Naive thymus-derived CD4-positive, alpha-beta T cell (primary cell): ENCODE measurements at regions of chrX and their contacts with region 1.

Region 1: GRCh38 chrX:136933611-136934145 is 53.2 kb upstream of the RBMX start:
- DNase-seq: no peak
- ATAC-seq: no peak
- H3K4me3 ChIP-seq: no peak overlapping the region
- H3K4me3 Mint-ChIP-seq: no peak overlapping the region
- H3K27ac ChIP-seq: no peak overlapping the region
- H3K27ac Mint-ChIP-seq: no peak overlapping the region
- H3K4me1 ChIP-seq: peaks cover 0 to 9% of the 10 kb centered on the region in 2 donors
- H3K4me1 Mint-ChIP-seq: peaks cover 0 to 23% (median 0%) of the 10 kb centered on the region in 7 donors
- H3K27me3 ChIP-seq: no peaks in the 10 kb centered on the region
- H3K27me3 Mint-ChIP-seq: no peaks in the 10 kb centered on the region

Region 2: DNA sequence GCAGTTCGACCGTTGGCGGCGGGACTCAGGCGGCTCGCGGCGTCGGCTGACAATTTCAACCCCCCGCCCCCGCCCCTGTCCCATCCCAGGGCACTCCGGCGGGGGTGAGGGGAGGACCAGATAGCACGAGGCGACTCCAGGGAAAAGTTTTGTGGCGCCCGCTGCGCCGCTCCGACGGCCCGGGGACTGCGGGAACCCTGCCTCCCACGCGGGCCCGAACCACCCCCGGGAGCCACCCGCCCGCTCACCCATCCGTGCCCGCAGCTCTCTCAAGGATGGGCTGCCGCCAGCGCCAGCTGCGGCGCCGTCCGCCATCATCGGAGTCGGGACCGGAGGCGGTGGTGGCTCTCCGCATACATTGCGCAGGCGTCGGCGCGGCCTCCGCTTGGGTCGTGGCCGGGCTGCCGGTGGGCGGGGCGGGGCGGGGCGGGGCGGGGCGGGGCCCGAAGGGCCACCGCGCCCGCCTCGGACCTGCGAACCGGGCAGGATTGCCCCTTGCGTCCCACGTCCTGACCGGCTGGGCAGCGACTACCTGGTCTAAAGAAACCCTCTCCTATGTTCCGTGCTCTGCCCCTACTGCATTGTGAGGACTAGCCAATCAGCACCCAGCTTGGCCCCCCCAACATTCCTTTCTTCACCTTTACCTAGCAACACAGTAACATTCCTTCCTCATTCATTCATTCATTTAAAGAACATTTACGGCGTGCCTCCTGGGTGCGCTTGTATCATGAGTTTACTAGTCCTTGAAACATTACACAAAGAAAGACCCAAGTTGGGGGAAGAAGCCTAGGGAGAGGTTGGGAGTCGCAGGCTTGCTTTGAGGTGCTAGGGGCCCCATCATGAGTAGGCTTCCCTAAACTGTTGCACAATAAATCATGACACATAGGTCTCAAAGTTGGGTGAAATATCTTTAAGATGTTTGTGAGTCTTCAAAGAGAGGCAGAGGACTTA is 682.4 kb before region 1 on chrX and contains the start of gene MAP7D3:
- CTCF ChIA-PET with region 1: no interaction called
- POLR2A ChIA-PET with region 1: no interaction called
- intact Hi-C with region 1: loop called in 1 of 2 experiments (anchors 2 kb)
- DNase-seq: peak; percentile 54 to 74 (median 66)
- ATAC-seq: peak; percentile 96
- H3K4me3 ChIP-seq: peak within 1 kb of the TSS; percentile 58
- H3K4me3 Mint-ChIP-seq: peak within 1 kb of the TSS; percentile 84 to 98 (median 91)
- H3K27ac ChIP-seq: peak within 1 kb of the TSS; percentile 67
- H3K27ac Mint-ChIP-seq: peak within 1 kb of the TSS; percentile 82 to 97 (median 89)
- H3K4me1 ChIP-seq: no peaks in the 10 kb centered on the region
- H3K4me1 Mint-ChIP-seq: peaks cover 0 to 15% (median 8%) of the 10 kb centered on the region in 7 donors
- H3K27me3 ChIP-seq: no peaks in the 10 kb centered on the region
- H3K27me3 Mint-ChIP-seq: no peaks in the 10 kb centered on the region
- total RNA-seq, gene MAP7D3: 5.9 to 15.8 (median 7.7) TPM

Region 3: GRCh38 chrX:136387951-136388502 is 545.7 kb before region 1 on chrX:
- CTCF ChIA-PET with region 1: no interaction called
- POLR2A ChIA-PET with region 1: no interaction called
- intact Hi-C with region 1: no loop called
- DNase-seq: no peak
- ATAC-seq: no peak
- H3K4me3 ChIP-seq: no peak overlapping the region
- H3K4me3 Mint-ChIP-seq: no peak overlapping the region
- H3K27ac ChIP-seq: no peak overlapping the region
- H3K27ac Mint-ChIP-seq: no peak overlapping the region
- H3K4me1 ChIP-seq: no peaks in the 10 kb centered on the region
- H3K4me1 Mint-ChIP-seq: peaks cover 0 to 2% (median 0%) of the 10 kb centered on the region in 7 donors
- H3K27me3 ChIP-seq: no peaks in the 10 kb centered on the region
- H3K27me3 Mint-ChIP-seq: peaks cover 0 to 18% (median 13%) of the 10 kb centered on the region in 5 donors

Region 4: DNA sequence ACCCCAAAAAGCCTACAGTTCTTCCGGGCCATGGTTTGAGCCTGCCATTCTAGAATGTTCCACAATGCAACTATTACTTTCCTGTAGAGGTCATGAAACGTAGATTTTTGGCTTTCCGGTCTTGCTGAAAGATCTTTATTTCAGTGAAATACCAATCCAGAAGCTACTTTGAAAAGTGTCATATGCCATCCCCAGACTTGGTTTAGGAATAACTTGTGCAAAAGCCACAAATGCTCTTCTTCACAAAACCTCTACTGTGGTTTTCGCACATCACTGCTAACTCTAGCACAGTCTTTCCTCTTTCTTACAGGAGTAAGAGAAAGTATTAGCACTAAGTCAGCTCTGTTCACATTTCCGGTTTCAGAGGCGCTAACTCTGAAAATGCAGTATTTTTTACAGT is 298.4 kb before region 1 on chrX:
- CTCF ChIA-PET with region 1: no interaction called
- POLR2A ChIA-PET with region 1: no interaction called
- intact Hi-C with region 1: no loop called
- DNase-seq: peak in 5 of 9 donors; percentile 49 to 68 (median 60)
- ATAC-seq: peak; percentile 80
- H3K4me3 ChIP-seq: peak overlapping the region; percentile 36
- H3K4me3 Mint-ChIP-seq: peak overlapping the region; percentile 68 to 84 (median 78)
- H3K27ac ChIP-seq: peak overlapping the region; percentile 53
- H3K27ac Mint-ChIP-seq: peak overlapping the region; percentile 80 to 94 (median 89)
- H3K4me1 ChIP-seq: peaks cover 62 to 88% of the 10 kb centered on the region in 2 donors
- H3K4me1 Mint-ChIP-seq: peaks cover 30 to 96% (median 83%) of the 10 kb centered on the region in 7 donors
- H3K27me3 ChIP-seq: no peaks in the 10 kb centered on the region
- H3K27me3 Mint-ChIP-seq: no peaks in the 10 kb centered on the region

Region 5: GRCh38 chrX:136953867-136954787 is 20.4 kb after region 1 on chrX:
- CTCF ChIA-PET with region 1: no interaction called
- POLR2A ChIA-PET with region 1: no interaction called
- intact Hi-C with region 1: no loop called
- DNase-seq: peak; percentile 7 to 51 (median 38)
- ATAC-seq: peak; percentile 69
- H3K4me3 ChIP-seq: no peak overlapping the region
- H3K4me3 Mint-ChIP-seq: no peak overlapping the region
- H3K27ac ChIP-seq: no peak overlapping the region
- H3K27ac Mint-ChIP-seq: no peak overlapping the region
- H3K4me1 ChIP-seq: no peaks in the 10 kb centered on the region
- H3K4me1 Mint-ChIP-seq: no peaks in the 10 kb centered on the region
- H3K27me3 ChIP-seq: no peaks in the 10 kb centered on the region
- H3K27me3 Mint-ChIP-seq: no peaks in the 10 kb centered on the region